ENCODE measurements at regions of chr22 and their contacts with region 1.

Region 1: DNA sequence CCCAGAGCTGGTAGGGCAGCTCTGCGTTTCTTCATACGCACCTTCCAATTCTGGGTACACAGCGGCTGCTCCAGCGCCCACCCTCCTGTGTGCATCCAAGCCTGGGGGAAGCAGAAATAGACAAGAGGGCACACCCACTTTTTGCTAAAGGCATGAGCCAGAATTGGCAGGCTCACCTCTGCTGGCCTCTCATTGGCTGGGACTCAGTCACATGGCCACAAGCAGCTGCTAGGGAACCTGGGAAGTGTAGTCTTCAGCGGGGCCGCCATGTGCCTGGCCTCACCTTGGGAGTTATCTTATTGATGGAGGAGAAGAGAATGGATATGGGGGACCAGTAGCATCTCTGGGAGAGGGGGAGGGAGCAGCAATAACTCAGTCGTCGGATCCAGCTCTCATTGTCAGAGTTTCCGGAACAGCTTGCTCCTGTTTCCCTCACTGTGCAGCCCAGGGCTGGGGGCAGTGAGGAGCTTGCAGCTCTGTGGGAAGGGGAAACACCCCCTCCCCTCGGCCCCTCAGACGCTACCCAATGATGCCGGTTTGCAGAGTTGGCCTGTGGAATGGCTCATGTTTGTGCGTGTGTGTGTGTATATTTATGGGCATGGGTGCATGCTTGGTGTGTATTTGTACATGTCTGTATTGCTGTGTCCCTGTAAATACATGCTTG is 11.8 kb upstream of the MIEF1 start:
- DNase-seq: peak; percentile 74 to 81
- ATAC-seq: peak; percentile 85 to 92 (median 88)
- H3K4me3 ChIP-seq: no peak overlapping the region
- H3K27ac ChIP-seq: peak overlapping the region in 1 of 10 donors; percentile 2
- H3K4me1 ChIP-seq: peaks cover 0 to 31% (median 4%) of the 10 kb centered on the region in 9 donors
- H3K27me3 ChIP-seq: no peaks in the 10 kb centered on the region
- CTCF ChIP-seq: no peak

Region 2: GRCh38 chr22:39439170-39439569 is 51.1 kb before region 1 on chr22:
- intact Hi-C with region 1: loop called in 2 of 10 experiments (anchors 5 to 10 kb)
- DNase-seq: no peak
- ATAC-seq: peak in 1 of 8 donors; percentile 13
- H3K4me3 ChIP-seq: no peak overlapping the region
- H3K27ac ChIP-seq: no peak overlapping the region
- H3K4me1 ChIP-seq: peaks cover 3 to 30% (median 18%) of the 10 kb centered on the region in 9 donors
- H3K27me3 ChIP-seq: peaks cover 0 to 13% (median 0%) of the 10 kb centered on the region in 7 donors
- CTCF ChIP-seq: no peak

Measured in heart right ventricle (tissue), 16 donors.